Activated T-helper 2 cell treated with anti-CD3 and anti-CD28 coated beads, Interferon-gamma antibody, Interleukin-2, Interleukin-4, amounts not matched to agents 10 μg/mL and 5 μg/mL and 100 μg/mL, durations not matched to agents 14 hours and 24 hours and 36 hours (primary cell): ENCODE measurements at regions of chr2 and their contacts with region 1.

Region 1: GRCh38 chr2:201158111-201158929 is 24.6 kb upstream of the CASP10 start:
- DNase-seq: peak; percentile 49
- H3K4me3 Mint-ChIP-seq: no peak overlapping the region
- H3K27ac Mint-ChIP-seq: peak overlapping the region; percentile 40
- H3K4me1 Mint-ChIP-seq: peaks cover 14% of the 10 kb centered on the region
- H3K27me3 Mint-ChIP-seq: no peaks in the 10 kb centered on the region

Region 2: DNA sequence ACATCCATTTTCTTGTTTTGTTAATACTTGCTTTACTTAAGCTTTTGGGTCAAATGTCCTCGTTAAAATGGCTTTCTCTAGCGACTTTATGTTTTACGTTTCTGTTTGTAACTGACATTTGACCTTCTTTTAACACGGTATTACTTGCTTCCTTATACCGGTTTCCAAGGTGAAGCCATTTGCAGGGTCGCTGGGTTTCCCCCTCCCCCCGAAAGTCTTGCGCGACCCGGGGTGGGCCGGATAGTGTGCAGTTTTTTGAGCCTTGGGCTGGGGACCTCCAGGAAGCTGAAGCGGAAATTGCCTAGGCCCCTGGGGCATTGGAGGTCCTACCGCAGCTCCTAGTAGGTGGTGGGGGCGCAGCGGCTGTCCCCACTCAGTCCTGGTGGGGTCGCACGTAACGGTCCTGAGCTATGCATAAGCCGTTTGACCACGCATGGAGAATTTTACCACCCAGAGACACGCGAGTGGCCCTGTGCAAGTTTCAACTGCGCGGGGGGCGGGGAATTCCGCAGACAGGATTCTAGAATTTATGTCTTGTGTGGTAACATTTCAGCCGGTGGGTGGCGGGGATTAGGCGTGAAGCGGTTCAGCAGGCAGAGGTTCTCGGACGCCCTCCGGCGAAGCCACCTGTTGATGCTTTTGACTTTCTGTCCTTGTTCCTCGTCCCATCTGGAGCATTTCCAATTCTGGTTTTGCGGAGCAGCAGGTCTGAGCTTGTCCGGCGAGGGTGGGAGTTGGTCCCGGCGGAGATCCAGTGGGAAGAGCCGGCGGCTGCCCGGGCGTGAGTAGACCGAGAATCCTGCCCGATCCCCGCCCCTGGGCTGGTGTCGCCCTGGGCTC is 40.0 kb before region 1 on chr2:
- intact Hi-C with region 1: loop called (anchors 1 kb)
- DNase-seq: peak; percentile 76
- H3K4me3 Mint-ChIP-seq: peak overlapping the region; percentile 94
- H3K27ac Mint-ChIP-seq: peak overlapping the region; percentile 95
- H3K4me1 Mint-ChIP-seq: peaks cover 42% of the 10 kb centered on the region
- H3K27me3 Mint-ChIP-seq: no peaks in the 10 kb centered on the region

Region 3: DNA sequence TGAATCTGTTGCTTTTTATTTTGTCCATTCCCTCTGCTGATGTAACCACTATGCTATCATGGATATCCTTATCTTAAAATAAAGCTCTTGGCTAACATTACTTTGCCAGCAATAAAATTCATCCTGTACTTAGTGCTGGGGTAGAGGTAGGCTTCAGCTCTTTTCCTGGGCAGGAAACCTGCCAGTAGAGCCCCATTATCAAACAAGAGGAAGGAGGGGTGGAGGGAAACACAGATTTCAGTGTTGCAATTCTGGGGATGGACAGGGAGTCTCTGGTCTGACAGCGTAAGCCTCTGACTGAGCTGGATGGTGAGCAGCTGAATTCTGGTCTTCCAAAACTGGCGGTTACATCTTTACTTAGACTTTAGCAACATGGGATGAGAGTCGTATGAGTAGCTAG is 149.6 kb after region 1 on chr2:
- intact Hi-C with region 1: no loop called
- DNase-seq: no peak
- H3K4me3 Mint-ChIP-seq: no peak overlapping the region
- H3K27ac Mint-ChIP-seq: no peak overlapping the region
- H3K4me1 Mint-ChIP-seq: no peaks in the 10 kb centered on the region
- H3K27me3 Mint-ChIP-seq: no peaks in the 10 kb centered on the region

Region 4: GRCh38 chr2:201420442-201421113 is 262.3 kb after region 1 on chr2:
- intact Hi-C with region 1: no loop called
- DNase-seq: no peak
- H3K4me3 Mint-ChIP-seq: no peak overlapping the region
- H3K27ac Mint-ChIP-seq: no peak overlapping the region
- H3K4me1 Mint-ChIP-seq: peaks cover 28% of the 10 kb centered on the region
- H3K27me3 Mint-ChIP-seq: no peaks in the 10 kb centered on the region